ENCODE measurements at regions of chr15 and their contacts with region 1.

Region 1: DNA sequence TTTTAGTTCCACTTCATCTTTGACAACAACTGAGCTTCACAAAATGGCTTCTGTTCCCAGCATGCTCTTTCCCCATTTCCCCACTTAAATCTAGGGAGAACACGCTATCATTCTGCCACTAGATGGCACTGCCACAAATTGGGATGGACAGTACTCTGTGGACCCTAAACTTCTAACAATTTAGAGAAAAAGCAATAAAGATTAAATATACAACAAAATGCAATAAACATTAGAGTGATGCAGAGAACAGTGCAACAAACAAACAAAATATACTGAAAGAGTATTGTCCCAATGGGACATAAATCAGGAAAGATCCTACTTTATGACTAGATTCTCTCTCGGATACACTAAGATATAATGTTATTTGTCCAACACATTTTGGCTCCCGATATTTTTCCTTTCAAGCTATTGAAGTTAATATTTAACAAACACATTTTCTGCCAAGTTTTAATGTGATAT is 169.7 kb upstream of the TMCO5A start:
- DNase-seq: peak; percentile 53
- H3K4me3 ChIP-seq: no peak overlapping the region
- H3K27ac ChIP-seq: no peak overlapping the region
- H3K4me1 ChIP-seq: peaks cover 13% of the 10 kb centered on the region
- H3K27me3 ChIP-seq: no peaks in the 10 kb centered on the region
- CTCF ChIP-seq: peak; percentile 43 to 74
- POLR2A ChIP-seq: no peak

Region 2: DNA sequence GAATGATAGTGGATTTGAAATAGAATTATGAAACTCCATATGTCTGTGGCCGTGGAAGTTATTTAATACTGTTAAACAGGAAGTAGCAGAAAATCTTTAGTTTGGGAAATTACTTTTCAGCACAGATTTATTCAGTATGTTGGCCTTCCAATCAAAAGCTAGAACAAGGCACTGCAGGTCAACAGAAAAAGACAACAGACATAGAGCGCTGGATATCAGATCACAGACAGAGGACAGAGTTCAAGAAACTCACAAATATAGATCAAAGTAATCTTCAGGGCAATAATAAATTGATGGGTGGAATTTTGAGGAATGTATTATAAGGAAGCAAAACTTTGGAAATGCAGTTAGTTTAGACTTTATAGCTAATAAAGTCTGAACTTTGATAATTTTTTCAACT is 10.2 kb after region 1 on chr15:
- CTCF ChIA-PET with region 1: interaction called, 11 read pairs
- POLR2A ChIA-PET with region 1: no interaction called
- dilution Hi-C with region 1: no loop called
- intact Hi-C with region 1: no loop called
- DNase-seq: no peak
- H3K4me3 ChIP-seq: no peak overlapping the region
- H3K27ac ChIP-seq: no peak overlapping the region
- H3K4me1 ChIP-seq: no peaks in the 10 kb centered on the region
- H3K27me3 ChIP-seq: peaks cover 0 to 4% of the 10 kb centered on the region in 2 experiments
- CTCF ChIP-seq: no peak
- POLR2A ChIP-seq: no peak

Region 3: GRCh38 chr15:37793851-37794250 is 29.1 kb after region 1 on chr15:
- CTCF ChIA-PET with region 1: interaction called, 31 read pairs
- POLR2A ChIA-PET with region 1: no interaction called
- dilution Hi-C with region 1: no loop called
- intact Hi-C with region 1: no loop called
- DNase-seq: peak; percentile 4
- H3K4me3 ChIP-seq: no peak overlapping the region
- H3K27ac ChIP-seq: no peak overlapping the region
- H3K4me1 ChIP-seq: peaks cover 4% of the 10 kb centered on the region
- H3K27me3 ChIP-seq: peaks cover 0 to 4% of the 10 kb centered on the region in 2 experiments
- CTCF ChIP-seq: peak in 1 of 2 donors; percentile 16
- POLR2A ChIP-seq: no peak

Region 4: DNA sequence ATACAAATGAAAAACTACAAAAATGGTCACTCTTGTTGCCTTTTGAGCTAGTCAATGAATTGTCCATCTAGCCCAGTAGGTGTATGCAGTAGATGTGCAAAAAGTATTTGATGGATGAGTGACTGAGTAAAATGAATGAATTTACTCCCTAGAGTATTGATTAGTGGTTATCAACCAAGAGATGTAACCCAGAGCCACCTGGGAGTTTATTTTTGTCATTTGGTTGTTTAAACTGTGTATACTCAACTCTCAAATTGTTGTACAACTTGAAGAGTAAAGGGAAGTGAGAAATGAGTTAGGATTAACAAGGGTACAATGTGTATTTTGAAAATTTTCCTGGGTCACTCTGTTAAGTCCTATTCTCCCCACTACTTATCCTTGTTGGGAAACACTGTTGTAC is 45.6 kb after region 1 on chr15:
- CTCF ChIA-PET with region 1: no interaction called
- POLR2A ChIA-PET with region 1: no interaction called
- dilution Hi-C with region 1: no loop called
- intact Hi-C with region 1: no loop called
- DNase-seq: no peak
- H3K4me3 ChIP-seq: no peak overlapping the region
- H3K27ac ChIP-seq: no peak overlapping the region
- H3K4me1 ChIP-seq: no peaks in the 10 kb centered on the region
- H3K27me3 ChIP-seq: peaks cover 0 to 3% of the 10 kb centered on the region in 2 experiments
- CTCF ChIP-seq: no peak
- POLR2A ChIP-seq: no peak

Region 5: DNA sequence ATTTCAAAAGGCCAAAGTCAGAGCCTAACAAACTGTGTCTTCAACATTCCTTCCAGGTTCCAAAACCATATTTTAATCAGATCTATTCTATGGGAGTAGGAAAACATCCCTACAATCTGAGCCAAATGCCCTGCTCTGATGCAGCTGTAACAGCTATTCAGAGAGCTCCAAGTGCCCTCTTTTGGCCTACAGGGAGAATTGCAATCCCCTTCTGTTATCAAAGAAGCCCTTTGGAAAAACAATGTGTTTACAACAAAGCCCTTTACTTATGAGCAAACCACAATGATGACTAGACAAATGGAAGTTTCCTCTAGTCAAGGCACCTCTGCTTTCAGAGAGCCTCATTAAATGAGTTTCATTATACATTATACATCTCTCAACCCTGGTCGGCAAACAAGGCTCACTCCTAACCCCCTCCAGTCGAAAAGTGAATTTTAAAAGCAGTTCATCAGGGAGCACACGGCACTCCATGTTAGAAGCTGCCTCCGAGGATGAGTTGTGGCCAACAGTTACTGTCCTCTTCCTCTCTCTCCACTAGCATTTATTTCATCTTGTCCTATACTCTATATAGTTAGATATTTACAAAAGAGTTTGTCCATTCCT is 127.1 kb after region 1 on chr15:
- CTCF ChIA-PET with region 1: interaction called, 47 read pairs
- POLR2A ChIA-PET with region 1: no interaction called
- dilution Hi-C with region 1: no loop called
- intact Hi-C with region 1: no loop called
- DNase-seq: peak; percentile 46
- H3K4me3 ChIP-seq: no peak overlapping the region
- H3K27ac ChIP-seq: no peak overlapping the region
- H3K4me1 ChIP-seq: peaks cover 3% of the 10 kb centered on the region
- H3K27me3 ChIP-seq: peaks cover 8 to 53% of the 10 kb centered on the region in 2 experiments
- CTCF ChIP-seq: peak; percentile 62 to 71
- POLR2A ChIP-seq: no peak

Measured in endothelial cell of umbilical vein (primary cell).